HCT116 (cell line): ENCODE measurements at regions of chr17 and their contacts with region 1.

Region 1: GRCh38 chr17:37047631-37048104 is 98.9 kb downstream of the AATF start:
- DNase-seq: peak; percentile 71
- ATAC-seq: peak; percentile 91
- H3K4me3 ChIP-seq: no peak overlapping the region
- H3K27ac ChIP-seq: no peak overlapping the region
- H3K4me1 ChIP-seq: 0 out of 4 replicates have a peak, but pooled peaks cover 2 to 5% of the 10 kb centered on the region in 2 experiments
- H3K27me3 ChIP-seq: no peaks in the 10 kb centered on the region
- CTCF ChIP-seq: peak; percentile 77 to 92 (median 88)
- POLR2A ChIP-seq: no peak
- RAD21 ChIP-seq: peak; percentile 95

Region 2: GRCh38 chr17:36629252-36629847 is 418.3 kb before region 1 on chr17:
- CTCF ChIA-PET with region 1: interaction called, 24 read pairs
- POLR2A ChIA-PET with region 1: interaction called, 3 read pairs
- RAD21 ChIA-PET with region 1: no interaction called
- intact Hi-C with region 1: loop called (anchors 1 kb)
- DNase-seq: peak; percentile 54
- ATAC-seq: peak; percentile 95
- H3K4me3 ChIP-seq: no peak overlapping the region
- H3K27ac ChIP-seq: no peak overlapping the region
- H3K4me1 ChIP-seq: peaks cover 0 to 4% of the 10 kb centered on the region in 2 experiments; a peak in 2 of 4 replicates
- H3K27me3 ChIP-seq: 0 out of 2 replicates have a peak, but pooled peaks cover 4% of the 10 kb centered on the region
- CTCF ChIP-seq: peak; percentile 92 to 98 (median 98)
- POLR2A ChIP-seq: no peak
- RAD21 ChIP-seq: peak; percentile 98

Region 3: DNA sequence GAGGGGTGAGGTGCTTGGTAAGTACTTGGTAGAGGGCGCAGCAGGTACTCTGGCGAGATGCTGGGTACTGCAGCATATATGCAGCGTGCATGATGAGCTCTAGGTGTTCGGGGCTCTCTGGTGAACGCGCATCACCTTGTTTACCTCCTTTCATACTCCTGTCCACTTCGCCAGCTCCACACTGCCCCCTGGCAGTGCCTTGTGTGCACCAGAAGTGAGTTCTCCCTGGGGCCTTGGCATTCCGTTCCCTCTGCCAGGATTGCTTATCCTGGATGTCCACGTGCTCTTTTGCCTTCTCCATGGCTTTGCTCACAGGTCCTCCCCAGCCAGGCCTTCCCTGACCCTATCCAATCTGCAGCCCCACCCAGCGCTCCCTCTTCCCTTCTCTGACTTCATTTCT is 292.1 kb before region 1 on chr17:
- CTCF ChIA-PET with region 1: interaction called, 7 read pairs
- POLR2A ChIA-PET with region 1: no interaction called
- RAD21 ChIA-PET with region 1: interaction called in 1 of 2 experiments, 3 read pairs
- intact Hi-C with region 1: loop called (anchors 5 kb)
- DNase-seq: peak; percentile 57
- ATAC-seq: peak; percentile 99
- H3K4me3 ChIP-seq: no peak overlapping the region
- H3K27ac ChIP-seq: no peak overlapping the region
- H3K4me1 ChIP-seq: peaks cover 0 to 6% of the 10 kb centered on the region in 2 experiments; a peak in 1 of 4 replicates
- H3K27me3 ChIP-seq: peaks cover 8% of the 10 kb centered on the region; the same call in 1 of the 2 replicates
- CTCF ChIP-seq: peak; percentile 42 to 87 (median 70); a peak in 5 of 6 replicates
- POLR2A ChIP-seq: no peak
- RAD21 ChIP-seq: peak; percentile 63

Region 4: GRCh38 chr17:36849871-36850348 is 197.8 kb before region 1 on chr17:
- CTCF ChIA-PET with region 1: interaction called, 5 read pairs
- POLR2A ChIA-PET with region 1: no interaction called
- RAD21 ChIA-PET with region 1: no interaction called
- intact Hi-C with region 1: loop called (anchors 10 kb)
- DNase-seq: peak; percentile 51
- ATAC-seq: peak; percentile 85
- H3K4me3 ChIP-seq: peak overlapping the region; percentile 10 to 27
- H3K27ac ChIP-seq: peak overlapping the region; percentile 51
- H3K4me1 ChIP-seq: peaks cover 25 to 45% of the 10 kb centered on the region in 2 experiments
- H3K27me3 ChIP-seq: no peaks in the 10 kb centered on the region
- CTCF ChIP-seq: peak in 2 of 3 experiments; percentile 56 to 71; a peak in 5 of 6 replicates
- POLR2A ChIP-seq: no peak
- RAD21 ChIP-seq: peak; percentile 49